ENCODE measurements at regions of chr19 and their contacts with region 1.

Region 1: DNA sequence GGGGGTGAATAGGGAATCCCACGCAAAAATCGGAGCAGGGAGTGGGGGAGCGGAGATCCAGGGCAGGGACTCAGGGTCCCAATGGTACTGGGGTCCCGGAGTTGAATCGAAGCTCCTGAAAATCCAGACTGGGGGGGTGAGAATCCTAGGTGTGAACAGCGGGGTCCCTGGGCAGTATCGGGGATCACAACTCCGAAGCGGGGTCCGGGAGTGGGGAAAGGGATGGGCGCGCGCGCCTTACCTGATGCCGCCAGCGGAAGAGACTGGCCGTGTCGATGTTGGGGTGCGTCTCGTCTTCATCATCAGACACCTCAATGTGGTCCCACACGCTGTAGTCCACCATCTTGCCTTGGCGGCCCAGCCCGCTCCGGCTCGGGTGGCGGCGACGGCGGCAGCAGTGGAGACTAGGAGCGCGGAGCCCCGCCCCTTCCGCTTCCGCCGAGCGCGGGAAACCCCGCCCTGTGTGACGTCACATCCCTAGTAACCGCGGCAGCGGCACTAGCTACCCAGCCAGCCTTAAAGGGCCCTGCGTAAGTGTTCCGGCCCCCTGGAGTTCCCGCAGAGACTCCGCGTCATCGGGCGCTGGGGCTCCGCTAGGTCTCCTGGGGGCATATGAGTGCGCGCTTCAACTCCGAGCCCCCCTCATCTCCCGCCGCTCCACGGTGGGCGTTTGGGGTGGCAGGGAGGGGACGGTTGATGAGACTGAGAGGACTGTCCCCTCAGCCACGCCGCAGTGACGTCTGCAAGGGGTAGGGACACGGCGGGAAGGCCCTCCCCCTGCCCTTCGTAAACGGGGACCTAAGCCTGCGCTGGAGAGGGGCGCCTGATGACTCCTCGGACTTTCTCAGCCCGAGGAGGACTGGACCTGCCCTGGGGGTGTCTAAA is at the start of gene CDC37:
- DNase-seq: peak; percentile 95 to 99 (median 97)
- ATAC-seq: peak; percentile 88
- H3K4me3 ChIP-seq: peak within 1 kb of the TSS; percentile 87
- H3K4me3 Mint-ChIP-seq: peak within 1 kb of the TSS; percentile 90 to 97 (median 95)
- H3K27ac ChIP-seq: peak within 1 kb of the TSS; percentile 97
- H3K27ac Mint-ChIP-seq: peak within 1 kb of the TSS; percentile 80 to 97 (median 95)
- H3K4me1 ChIP-seq: peaks cover 55 to 59% of the 10 kb centered on the region in 2 donors
- H3K4me1 Mint-ChIP-seq: peaks cover 40 to 85% (median 59%) of the 10 kb centered on the region in 7 donors
- H3K27me3 ChIP-seq: no peaks in the 10 kb centered on the region
- H3K27me3 Mint-ChIP-seq: peaks cover 0 to 3% (median 0%) of the 10 kb centered on the region in 5 donors
- total RNA-seq, gene CDC37: 169 to 229 (median 180) TPM

Region 2: DNA sequence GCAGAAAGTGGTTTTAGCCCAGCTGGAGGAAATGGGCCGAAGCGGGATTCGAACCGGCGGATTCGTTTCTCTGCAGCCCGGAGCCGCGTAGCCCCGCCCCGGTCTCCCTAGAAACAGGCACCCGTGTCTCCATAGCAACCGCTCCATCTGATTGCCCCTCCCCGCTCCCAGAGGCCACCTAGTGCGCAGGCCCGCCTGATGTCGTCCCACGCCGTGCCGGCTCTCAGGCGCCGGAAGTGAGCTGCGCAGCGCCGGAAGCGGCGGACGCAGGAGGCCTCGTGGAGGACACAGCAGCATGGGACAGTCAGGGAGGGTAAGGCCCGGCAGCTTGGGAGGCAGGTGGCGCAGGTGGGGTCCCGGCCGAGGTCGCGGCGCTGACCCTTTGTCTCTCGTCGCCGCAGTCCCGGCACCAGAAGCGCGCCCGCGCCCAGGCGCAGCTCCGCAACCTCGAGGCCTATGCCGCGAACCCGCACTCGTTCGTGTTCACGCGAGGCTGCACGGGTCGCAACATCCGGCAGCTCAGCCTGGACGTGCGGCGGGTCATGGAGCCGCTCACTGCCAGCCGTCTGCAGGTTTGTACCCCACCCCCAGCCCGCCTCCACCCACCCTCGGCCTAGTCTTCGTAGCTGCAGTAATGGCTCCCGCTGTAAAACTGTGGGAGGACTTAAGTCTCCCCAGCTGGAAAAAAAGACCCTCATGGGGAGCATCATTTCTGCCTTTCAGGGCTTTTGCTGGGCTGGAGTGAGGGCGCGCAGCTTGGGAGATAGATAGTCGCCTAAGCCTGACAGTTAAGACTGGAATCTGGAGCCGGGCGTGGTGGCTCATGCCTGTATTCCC is 297.1 kb before region 1 on chr19 and contains the start of gene PPAN:
- CTCF ChIA-PET with region 1: no interaction called
- POLR2A ChIA-PET with region 1: no interaction called
- intact Hi-C with region 1: loop called in 1 of 2 experiments (anchors 1 kb)
- DNase-seq: peak; percentile 88 to 98 (median 97)
- ATAC-seq: peak; percentile 86
- H3K4me3 ChIP-seq: peak within 1 kb of the TSS; percentile 60
- H3K4me3 Mint-ChIP-seq: peak within 1 kb of the TSS; percentile 75 to 91 (median 88)
- H3K27ac ChIP-seq: peak within 1 kb of the TSS; percentile 86
- H3K27ac Mint-ChIP-seq: peak within 1 kb of the TSS; percentile 92 to 98 (median 97)
- H3K4me1 ChIP-seq: peaks cover 53 to 65% of the 10 kb centered on the region in 2 donors
- H3K4me1 Mint-ChIP-seq: peaks cover 32 to 61% (median 56%) of the 10 kb centered on the region in 7 donors
- H3K27me3 ChIP-seq: no peaks in the 10 kb centered on the region
- H3K27me3 Mint-ChIP-seq: no peaks in the 10 kb centered on the region
- total RNA-seq, gene PPAN: 87.6 to 122 (median 109) TPM

Region 3: GRCh38 chr19:10332955-10333757 is 70.2 kb before region 1 on chr19 and contains the start of gene RAVER1:
- CTCF ChIA-PET with region 1: no interaction called
- POLR2A ChIA-PET with region 1: no interaction called
- intact Hi-C with region 1: loop called (anchors 1 to 2 kb)
- DNase-seq: peak; percentile 86 to 98 (median 97)
- ATAC-seq: peak; percentile 98
- H3K4me3 ChIP-seq: peak within 1 kb of the TSS; percentile 89
- H3K4me3 Mint-ChIP-seq: peak within 1 kb of the TSS; percentile 89 to 98 (median 93)
- H3K27ac ChIP-seq: peak within 1 kb of the TSS; percentile 91
- H3K27ac Mint-ChIP-seq: peak within 1 kb of the TSS; percentile 85 to 97 (median 95)
- H3K4me1 ChIP-seq: peaks cover 17 to 31% of the 10 kb centered on the region in 2 donors
- H3K4me1 Mint-ChIP-seq: peaks cover 6 to 48% (median 33%) of the 10 kb centered on the region in 7 donors
- H3K27me3 ChIP-seq: no peaks in the 10 kb centered on the region
- H3K27me3 Mint-ChIP-seq: no peaks in the 10 kb centered on the region
- total RNA-seq, gene RAVER1: 43.2 to 81.1 (median 50.2) TPM

Region 4: GRCh38 chr19:10416380-10417257 is 13.2 kb after region 1 on chr19:
- CTCF ChIA-PET with region 1: interaction called, 97 read pairs
- POLR2A ChIA-PET with region 1: interaction called, 32 read pairs
- intact Hi-C with region 1: loop called (anchors 1 kb)
- DNase-seq: peak; percentile 93 to 99 (median 97)
- ATAC-seq: peak; percentile 91
- H3K4me3 ChIP-seq: peak overlapping the region; percentile 43
- H3K4me3 Mint-ChIP-seq: peak overlapping the region; percentile 63 to 92 (median 77)
- H3K27ac ChIP-seq: peak overlapping the region; percentile 55
- H3K27ac Mint-ChIP-seq: peak overlapping the region; percentile 75 to 98 (median 97)
- H3K4me1 ChIP-seq: peaks cover 41 to 53% of the 10 kb centered on the region in 2 donors
- H3K4me1 Mint-ChIP-seq: peaks cover 20 to 59% (median 43%) of the 10 kb centered on the region in 7 donors
- H3K27me3 ChIP-seq: peaks cover 18 to 29% of the 10 kb centered on the region in 2 donors
- H3K27me3 Mint-ChIP-seq: peaks cover 25 to 33% (median 26%) of the 10 kb centered on the region in 5 donors

Region 5: GRCh38 chr19:10431943-10432735 is 28.8 kb after region 1 on chr19:
- CTCF ChIA-PET with region 1: interaction called, 31 read pairs
- POLR2A ChIA-PET with region 1: interaction called, 8 read pairs
- intact Hi-C with region 1: loop called (anchors 1 kb)
- DNase-seq: peak in 8 of 9 donors; percentile 44 to 64 (median 54)
- ATAC-seq: peak; percentile 58
- H3K4me3 ChIP-seq: peak overlapping the region; percentile 50
- H3K4me3 Mint-ChIP-seq: peak overlapping the region; percentile 82 to 94 (median 88)
- H3K27ac ChIP-seq: peak overlapping the region; percentile 46
- H3K27ac Mint-ChIP-seq: peak overlapping the region in 7 of 9 donors; percentile 26 to 95 (median 82)
- H3K4me1 ChIP-seq: peaks cover 19 to 33% of the 10 kb centered on the region in 2 donors
- H3K4me1 Mint-ChIP-seq: peaks cover 22 to 69% (median 33%) of the 10 kb centered on the region in 7 donors
- H3K27me3 ChIP-seq: peaks cover 0 to 9% of the 10 kb centered on the region in 2 donors
- H3K27me3 Mint-ChIP-seq: peaks cover 22 to 38% (median 31%) of the 10 kb centered on the region in 5 donors

Region 6: GRCh38 chr19:10502524-10503001 is 99.2 kb after region 1 on chr19:
- CTCF ChIA-PET with region 1: no interaction called
- POLR2A ChIA-PET with region 1: no interaction called
- intact Hi-C with region 1: loop called (anchors 1 to 2 kb)
- DNase-seq: peak; percentile 71 to 95 (median 81)
- ATAC-seq: peak; percentile 94
- H3K4me3 ChIP-seq: peak overlapping the region; percentile 88
- H3K4me3 Mint-ChIP-seq: peak overlapping the region; percentile 72 to 96 (median 86)
- H3K27ac ChIP-seq: peak overlapping the region; percentile 83
- H3K27ac Mint-ChIP-seq: peak overlapping the region in 8 of 9 donors; percentile 69 to 91 (median 78)
- H3K4me1 ChIP-seq: peaks cover under 1 to 8% of the 10 kb centered on the region in 2 donors
- H3K4me1 Mint-ChIP-seq: peaks cover 22 to 42% (median 36%) of the 10 kb centered on the region in 7 donors
- H3K27me3 ChIP-seq: no peaks in the 10 kb centered on the region
- H3K27me3 Mint-ChIP-seq: peaks cover 0 to 3% (median 0%) of the 10 kb centered on the region in 5 donors

Region 7: DNA sequence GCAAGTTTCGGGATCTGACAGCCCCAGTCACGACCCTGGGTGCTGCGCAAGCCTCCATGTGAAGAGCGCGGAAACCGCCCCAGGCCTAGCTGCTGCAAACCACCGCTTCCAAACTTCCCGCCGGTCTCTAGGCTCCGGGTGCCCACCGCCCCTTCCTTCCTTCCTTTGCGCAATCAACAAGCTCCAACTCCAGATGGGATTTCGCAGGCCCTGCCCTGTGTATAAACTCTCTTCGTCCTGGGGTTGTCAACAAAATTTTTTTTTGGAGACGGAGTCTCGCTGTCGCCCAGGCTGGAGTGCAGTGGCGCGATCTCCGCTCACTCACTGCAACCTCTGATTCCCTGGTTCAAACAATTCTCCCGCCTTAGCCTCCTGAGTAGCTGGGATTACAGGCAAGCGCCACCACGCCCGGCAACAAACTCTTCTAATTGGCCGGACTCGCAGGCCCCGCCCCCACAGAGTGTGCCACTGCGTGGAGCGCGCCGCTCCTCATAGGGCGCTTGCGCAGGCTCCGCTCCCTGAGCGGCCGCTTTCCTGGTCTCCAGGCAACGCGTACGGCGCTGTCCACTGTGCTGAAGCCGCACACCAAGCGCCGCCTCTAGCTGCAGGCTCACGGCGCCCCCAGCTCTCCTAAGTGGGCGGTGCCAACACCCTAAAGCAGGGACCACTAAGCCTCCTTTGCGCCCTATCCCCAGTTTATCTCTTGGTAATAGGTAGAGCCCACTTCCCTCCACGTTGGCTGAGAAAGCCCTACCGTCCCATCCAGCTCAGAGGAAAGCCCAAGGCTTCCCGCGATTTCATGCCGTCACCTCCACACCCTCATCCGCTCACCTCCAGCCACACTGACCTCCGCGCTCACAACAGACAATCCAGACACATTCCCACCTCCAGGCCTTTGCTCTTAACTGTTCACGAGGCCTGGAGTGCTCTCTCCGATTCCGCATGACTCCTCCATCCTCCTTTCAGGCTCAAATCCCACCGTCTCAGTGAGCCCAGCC is 292.3 kb after region 1 on chr19:
- CTCF ChIA-PET with region 1: interaction called, 7 read pairs
- POLR2A ChIA-PET with region 1: no interaction called
- intact Hi-C with region 1: loop called in 1 of 2 experiments (anchors 5 kb)
- DNase-seq: peak; percentile 79 to 90 (median 85)
- ATAC-seq: peak; percentile 99
- H3K4me3 ChIP-seq: peak overlapping the region; percentile 36
- H3K4me3 Mint-ChIP-seq: peak overlapping the region; percentile 81 to 89 (median 86)
- H3K27ac ChIP-seq: no peak overlapping the region
- H3K27ac Mint-ChIP-seq: peak overlapping the region in 8 of 9 donors; percentile 9 to 88 (median 56)
- H3K4me1 ChIP-seq: peaks cover 4 to 10% of the 10 kb centered on the region in 2 donors
- H3K4me1 Mint-ChIP-seq: peaks cover 12 to 25% (median 21%) of the 10 kb centered on the region in 7 donors
- H3K27me3 ChIP-seq: no peaks in the 10 kb centered on the region
- H3K27me3 Mint-ChIP-seq: peaks cover 0 to 11% (median 0%) of the 10 kb centered on the region in 5 donors